GM18951 (cell line): ENCODE measurements at regions of chr1 and their contacts with region 1.

Region 1: GRCh38 chr1:22303816-22304215 is 147.8 kb upstream of the ZBTB40 start:
- POLR2A ChIP-seq: no peak

Region 2: GRCh38 chr1:22216210-22216883 is 87.5 kb before region 1 on chr1:
- in situ Hi-C with region 1: loop called (anchors 5 kb)
- POLR2A ChIP-seq: no peak